WTC11 (cell line): ENCODE measurements at regions of chr1 and their contacts with region 1.

Region 1: GRCh38 chr1:38990738-38991639 is at the start of gene AKIRIN1:
- DNase-seq: peak; percentile 100
- ATAC-seq: peak; percentile 84
- H3K4me3 Mint-ChIP-seq: peak within 1 kb of the TSS; percentile 92
- H3K27ac Mint-ChIP-seq: peak within 1 kb of the TSS; percentile 95
- H3K4me1 Mint-ChIP-seq: peaks cover 54% of the 10 kb centered on the region
- H3K27me3 Mint-ChIP-seq: no peaks in the 10 kb centered on the region
- CTCF ChIP-seq: no peak
- total RNA-seq, gene AKIRIN1: 183 to 214 TPM (median 212 TPM) in 3 replicates

Region 2: DNA sequence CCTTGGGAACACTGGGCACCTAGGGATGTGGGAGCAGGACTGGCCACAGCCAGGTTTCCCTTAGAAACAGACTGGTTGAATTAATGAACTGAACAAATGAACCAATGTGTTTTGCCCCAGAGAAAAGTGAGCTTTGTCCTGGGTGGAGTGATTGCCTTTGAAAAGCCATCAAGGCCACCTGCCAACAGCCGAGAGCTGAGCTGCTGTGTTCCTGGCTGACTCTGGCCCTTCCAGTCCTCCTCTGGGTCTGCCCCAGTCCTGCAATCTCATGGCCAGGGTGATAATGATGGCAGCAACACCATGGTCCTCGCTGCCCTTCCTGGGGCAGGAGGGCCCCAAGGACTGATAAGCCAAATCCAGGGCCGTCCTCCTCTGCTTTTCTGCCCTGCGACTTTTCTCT is 91.4 kb before region 1 on chr1:
- CTCF ChIA-PET with region 1: no interaction called
- POLR2A ChIA-PET with region 1: no interaction called
- DNase-seq: no peak
- ATAC-seq: no peak
- H3K4me3 Mint-ChIP-seq: no peak overlapping the region
- H3K27ac Mint-ChIP-seq: no peak overlapping the region
- H3K4me1 Mint-ChIP-seq: no peaks in the 10 kb centered on the region
- H3K27me3 Mint-ChIP-seq: no peaks in the 10 kb centered on the region
- CTCF ChIP-seq: no peak

Region 3: DNA sequence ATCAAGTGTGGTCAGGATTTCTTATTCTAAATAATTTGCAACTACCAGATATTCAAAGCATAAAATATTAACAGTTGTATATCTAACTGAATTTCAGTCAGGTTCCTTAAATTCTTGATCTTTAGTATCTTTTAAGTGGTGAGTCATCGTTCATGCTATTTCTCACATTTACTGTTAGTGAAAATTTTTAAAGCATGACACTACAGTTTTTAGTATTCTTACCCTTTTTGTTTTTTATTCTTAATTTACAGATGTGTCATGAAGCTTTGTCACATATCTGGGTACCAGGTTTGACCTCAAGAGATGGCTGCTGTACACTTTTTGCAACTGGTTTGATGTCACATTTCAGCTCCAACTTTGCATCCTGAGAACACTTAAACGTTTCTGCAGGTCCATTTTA is 12.8 kb after region 1 on chr1:
- CTCF ChIA-PET with region 1: interaction called, 4 read pairs
- POLR2A ChIA-PET with region 1: interaction called, 10 read pairs
- DNase-seq: no peak
- ATAC-seq: no peak
- H3K4me3 Mint-ChIP-seq: no peak overlapping the region
- H3K27ac Mint-ChIP-seq: peak overlapping the region; percentile 98
- H3K4me1 Mint-ChIP-seq: peaks cover 71% of the 10 kb centered on the region
- H3K27me3 Mint-ChIP-seq: no peaks in the 10 kb centered on the region
- CTCF ChIP-seq: no peak

Region 4: GRCh38 chr1:39034114-39034654 is 43.2 kb after region 1 on chr1:
- CTCF ChIA-PET with region 1: no interaction called
- POLR2A ChIA-PET with region 1: interaction called, 10 read pairs
- DNase-seq: no peak
- ATAC-seq: no peak
- H3K4me3 Mint-ChIP-seq: no peak overlapping the region
- H3K27ac Mint-ChIP-seq: no peak overlapping the region
- H3K4me1 Mint-ChIP-seq: no peaks in the 10 kb centered on the region
- H3K27me3 Mint-ChIP-seq: no peaks in the 10 kb centered on the region
- CTCF ChIP-seq: no peak

Region 5: GRCh38 chr1:39086386-39086785 is 95.4 kb after region 1 on chr1:
- CTCF ChIA-PET with region 1: no interaction called
- POLR2A ChIA-PET with region 1: no interaction called
- DNase-seq: no peak
- ATAC-seq: no peak
- H3K4me3 Mint-ChIP-seq: no peak overlapping the region
- H3K27ac Mint-ChIP-seq: no peak overlapping the region
- H3K4me1 Mint-ChIP-seq: peaks cover 8% of the 10 kb centered on the region
- H3K27me3 Mint-ChIP-seq: peaks cover 16% of the 10 kb centered on the region
- CTCF ChIP-seq: no peak